ENCODE measurements at regions of chr14 and their contacts with region 1.

Region 1: DNA sequence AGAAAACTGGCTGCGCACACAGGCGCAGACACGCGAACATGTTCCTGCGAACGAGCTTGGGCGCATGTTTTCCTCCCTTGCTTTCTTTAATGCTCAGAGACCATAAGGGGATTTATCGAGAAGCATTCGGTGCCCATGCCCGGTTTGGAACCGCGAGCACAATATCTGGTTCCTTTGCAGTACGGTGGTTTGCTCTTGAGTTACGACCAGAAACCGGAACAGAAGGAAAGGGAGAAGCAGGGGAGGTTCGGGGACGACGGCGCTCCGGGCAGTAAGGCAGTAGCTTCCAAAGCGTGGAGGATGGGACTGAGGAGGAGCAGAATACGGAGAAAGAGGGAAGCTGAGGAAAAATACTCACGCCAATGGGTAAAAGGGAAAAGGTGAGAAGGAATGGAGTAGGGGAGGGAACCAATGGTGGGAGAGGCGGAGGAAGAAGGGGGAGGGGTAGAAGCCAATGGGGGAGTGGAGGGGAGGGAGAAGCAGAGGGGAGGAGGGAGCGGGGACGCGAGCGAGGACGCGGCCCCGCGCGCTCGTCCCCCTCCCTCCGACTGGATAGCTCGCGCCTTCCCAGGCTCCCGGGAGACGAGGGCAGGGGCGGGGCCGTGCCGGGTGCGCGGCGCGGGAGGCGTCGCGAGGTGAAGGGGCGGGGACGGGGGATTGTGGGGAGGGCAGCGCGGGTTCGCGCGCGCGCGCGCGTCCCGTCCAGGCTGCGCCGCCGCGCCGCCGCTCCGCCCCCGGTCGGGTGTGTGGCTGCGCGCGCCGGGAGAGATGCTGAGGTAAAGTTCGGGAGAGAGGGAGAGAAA is 625 bp upstream of the ARHGAP5 start:
- DNase-seq: peak; percentile 95 to 97
- H3K4me3 ChIP-seq: peak overlapping the region; percentile 65 to 71
- H3K27ac ChIP-seq: peak overlapping the region; percentile 97 to 98
- H3K4me1 ChIP-seq: peaks cover 0 to 6% of the 10 kb centered on the region in 2 donors
- H3K27me3 ChIP-seq: no peaks in the 10 kb centered on the region
- CTCF ChIP-seq: no peak
- POLR2A ChIP-seq: peak; percentile 60 to 72

Region 2: DNA sequence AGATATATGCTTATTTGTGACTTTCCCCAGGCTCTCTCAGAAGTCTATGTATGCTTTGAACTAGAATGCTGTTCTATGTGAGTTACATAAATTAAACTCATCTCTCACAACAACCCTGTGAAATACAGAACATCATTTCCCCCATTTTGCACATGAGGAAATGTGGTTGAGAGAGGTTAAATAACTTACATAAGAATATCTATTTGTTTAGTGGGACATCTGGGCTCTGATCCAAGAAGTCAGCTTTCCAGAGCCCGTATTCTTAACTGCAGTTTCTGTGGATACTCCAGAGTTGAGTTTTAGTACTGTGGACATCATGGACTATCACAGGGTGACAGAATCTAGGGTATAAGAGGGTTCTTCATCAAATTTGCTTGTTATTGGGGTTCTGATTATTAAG is 241.9 kb before region 1 on chr14:
- intact Hi-C with region 1: no loop called
- DNase-seq: no peak
- H3K4me3 ChIP-seq: no peak overlapping the region
- H3K27ac ChIP-seq: no peak overlapping the region
- H3K4me1 ChIP-seq: no peaks in the 10 kb centered on the region
- H3K27me3 ChIP-seq: no peaks in the 10 kb centered on the region
- CTCF ChIP-seq: no peak
- POLR2A ChIP-seq: no peak

Region 3: DNA sequence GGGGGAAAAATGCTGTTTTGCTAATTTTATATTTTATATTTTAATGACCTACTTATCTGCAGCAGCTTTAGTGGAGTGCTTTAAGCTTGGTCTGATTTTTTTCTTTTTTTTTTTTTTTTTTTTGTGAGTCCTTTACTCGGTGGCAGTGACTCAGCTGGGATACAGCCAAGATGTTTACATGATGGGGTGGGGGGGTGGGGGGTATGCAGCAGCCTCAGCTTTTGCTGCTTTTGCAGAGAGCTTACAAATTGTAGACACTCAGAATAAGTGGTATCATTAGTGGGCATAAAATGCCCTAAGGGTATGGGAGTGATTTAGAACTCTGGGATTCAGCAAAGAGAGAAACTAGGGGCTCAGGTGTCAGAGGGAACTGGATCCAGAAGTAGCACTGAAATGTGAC is 37.6 kb before region 1 on chr14:
- intact Hi-C with region 1: no loop called
- DNase-seq: no peak
- H3K4me3 ChIP-seq: no peak overlapping the region
- H3K27ac ChIP-seq: no peak overlapping the region
- H3K4me1 ChIP-seq: no peaks in the 10 kb centered on the region
- H3K27me3 ChIP-seq: no peaks in the 10 kb centered on the region
- CTCF ChIP-seq: no peak
- POLR2A ChIP-seq: no peak

Region 4: DNA sequence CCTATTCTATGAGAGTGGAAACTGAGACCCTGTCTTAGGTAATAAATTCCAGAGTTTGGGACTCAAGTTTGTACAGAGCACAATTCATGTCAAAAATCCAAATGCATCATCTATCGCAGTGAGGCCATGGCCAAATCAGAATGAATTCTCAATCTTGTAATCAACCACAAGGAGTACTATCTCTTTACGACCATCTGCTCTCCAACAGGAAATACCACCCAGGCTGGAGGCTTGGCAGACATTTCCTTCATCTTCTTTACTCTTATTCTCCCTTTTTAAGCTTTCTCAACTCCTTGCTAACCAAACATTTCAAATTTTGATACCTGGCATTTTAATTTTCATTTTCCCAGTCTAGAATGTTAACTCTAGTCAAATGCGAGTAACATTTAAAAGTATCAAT is 92.7 kb after region 1 on chr14:
- intact Hi-C with region 1: no loop called
- DNase-seq: no peak
- H3K4me3 ChIP-seq: no peak overlapping the region
- H3K27ac ChIP-seq: no peak overlapping the region
- H3K4me1 ChIP-seq: no peaks in the 10 kb centered on the region
- H3K27me3 ChIP-seq: no peaks in the 10 kb centered on the region
- CTCF ChIP-seq: no peak
- POLR2A ChIP-seq: no peak

Region 5: DNA sequence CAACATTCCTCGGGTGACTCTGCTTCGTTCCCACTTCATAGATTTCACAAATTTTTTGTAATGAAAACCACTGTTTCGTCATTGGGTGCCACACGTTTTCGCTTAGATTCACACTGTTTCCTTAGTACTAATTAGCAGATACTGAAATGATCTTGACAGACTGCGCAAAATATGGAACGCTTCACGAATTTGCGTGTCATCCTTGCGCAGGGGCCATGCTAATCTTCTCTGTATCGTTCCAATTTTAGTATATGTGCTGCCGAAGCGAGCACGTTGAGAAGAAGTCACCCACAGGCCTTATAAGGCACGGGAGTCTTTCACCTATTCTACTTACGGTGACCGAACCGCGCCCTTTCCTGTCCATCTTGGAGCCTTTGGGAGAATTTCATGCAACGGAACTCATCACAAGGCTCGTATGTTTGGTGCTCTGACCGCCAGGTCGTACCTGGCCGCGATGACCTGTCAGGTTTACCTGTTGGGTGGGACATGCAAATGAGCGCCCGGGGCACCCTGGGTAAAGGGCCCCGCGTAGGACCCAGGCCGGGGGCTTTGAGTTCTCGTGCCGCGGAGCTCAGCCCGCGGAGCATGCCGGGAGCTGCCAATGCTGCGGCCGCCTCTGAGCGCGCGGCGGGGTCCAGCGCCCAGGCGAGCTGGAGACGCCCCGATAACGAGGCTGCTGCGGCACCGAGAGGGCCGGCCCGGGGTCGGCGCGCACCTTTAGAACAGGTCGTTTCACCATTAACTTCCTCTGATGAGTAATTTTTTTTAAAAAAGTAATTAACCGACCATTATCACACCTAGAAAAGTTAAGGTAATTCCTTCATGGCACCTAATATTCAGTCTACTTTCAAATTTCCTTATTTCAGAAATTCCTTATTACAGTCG is 126.8 kb after region 1 on chr14 and contains the start of gene RNU6-8:
- intact Hi-C with region 1: loop called (anchors 2 kb)
- DNase-seq: peak; percentile 86 to 89
- H3K4me3 ChIP-seq: peak within 1 kb of the TSS; percentile 59 to 85
- H3K27ac ChIP-seq: peak within 1 kb of the TSS; percentile 89
- H3K4me1 ChIP-seq: no peaks in the 10 kb centered on the region
- H3K27me3 ChIP-seq: no peaks in the 10 kb centered on the region
- CTCF ChIP-seq: no peak
- POLR2A ChIP-seq: peak in 1 of 2 donors; percentile 69
- total RNA-seq, gene RNU6-8: not detected

Region 6: GRCh38 chr14:32252030-32252670 is 175.7 kb after region 1 on chr14:
- intact Hi-C with region 1: loop called (anchors 10 kb)
- DNase-seq: peak in 1 of 2 donors; percentile 63
- H3K4me3 ChIP-seq: no peak overlapping the region
- H3K27ac ChIP-seq: no peak overlapping the region
- H3K4me1 ChIP-seq: no peaks in the 10 kb centered on the region
- H3K27me3 ChIP-seq: no peaks in the 10 kb centered on the region
- CTCF ChIP-seq: peak; percentile 78 to 86 (median 80)
- POLR2A ChIP-seq: no peak

Region 7: DNA sequence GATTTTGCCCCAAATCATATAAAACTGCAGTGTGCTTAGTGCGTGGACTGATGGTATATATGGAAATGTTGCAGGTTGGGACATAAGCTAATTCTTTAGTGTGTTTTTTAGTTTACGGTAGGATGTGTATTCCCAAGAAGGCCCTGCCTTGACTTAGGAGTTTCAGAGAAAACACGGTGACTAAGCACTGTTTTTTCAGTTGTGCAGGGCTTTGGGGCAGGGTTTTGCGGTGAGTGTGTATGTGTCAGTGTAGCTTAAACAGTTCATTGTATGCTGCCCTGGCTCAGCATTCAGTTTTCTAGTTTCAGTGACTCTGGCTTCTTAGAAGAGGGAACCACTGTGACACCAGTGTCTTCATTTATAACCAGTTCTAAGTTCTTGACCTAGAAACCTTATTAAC is 353.8 kb after region 1 on chr14:
- intact Hi-C with region 1: no loop called
- DNase-seq: no peak
- H3K4me3 ChIP-seq: no peak overlapping the region
- H3K27ac ChIP-seq: no peak overlapping the region
- H3K4me1 ChIP-seq: no peaks in the 10 kb centered on the region
- H3K27me3 ChIP-seq: no peaks in the 10 kb centered on the region
- CTCF ChIP-seq: no peak
- POLR2A ChIP-seq: no peak

Measured in uterus (tissue), 4 donors.